ENCODE measurements at regions of chr4 and their contacts with region 1.

Region 1: DNA sequence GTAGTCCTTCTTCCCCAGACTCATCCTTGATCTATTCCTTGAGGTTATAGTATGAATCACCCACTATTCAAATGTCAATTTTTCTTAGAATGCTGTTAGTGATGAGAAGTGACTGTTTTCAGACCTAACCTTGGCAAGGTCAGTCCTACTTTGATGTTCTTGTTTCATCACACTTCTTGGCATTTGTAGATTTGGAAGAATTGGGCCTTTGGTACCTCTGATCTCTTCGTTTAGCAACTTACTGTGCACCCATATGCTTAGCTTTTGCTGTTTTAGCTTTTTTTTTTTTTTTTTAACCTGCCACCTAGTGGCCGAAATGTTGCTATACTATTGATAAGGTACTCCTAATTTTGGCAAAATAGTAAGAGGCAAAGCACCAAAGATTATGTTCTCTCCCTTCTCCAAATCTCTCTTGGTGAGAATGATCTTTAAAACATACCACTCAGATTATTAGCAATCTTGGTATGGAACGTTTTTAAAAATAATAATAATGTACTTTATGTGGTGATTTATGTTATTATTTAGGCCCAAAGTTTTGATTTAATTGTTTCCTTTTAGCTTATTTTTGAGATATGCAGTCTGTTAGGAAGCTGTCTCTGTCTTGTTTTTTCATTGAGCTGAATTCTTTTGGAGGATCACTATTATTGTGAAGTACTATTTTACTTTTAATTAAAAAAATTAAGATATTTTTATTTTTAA is 16.6 kb downstream of the DCK start:
- DNase-seq: no peak
- H3K4me3 ChIP-seq: no peak overlapping the region
- H3K27ac ChIP-seq: no peak overlapping the region
- H3K4me1 ChIP-seq: no peaks in the 10 kb centered on the region
- H3K27me3 ChIP-seq: no peaks in the 10 kb centered on the region
- CTCF ChIP-seq: peak in 1 of 3 experiments; percentile 50

Region 2: DNA sequence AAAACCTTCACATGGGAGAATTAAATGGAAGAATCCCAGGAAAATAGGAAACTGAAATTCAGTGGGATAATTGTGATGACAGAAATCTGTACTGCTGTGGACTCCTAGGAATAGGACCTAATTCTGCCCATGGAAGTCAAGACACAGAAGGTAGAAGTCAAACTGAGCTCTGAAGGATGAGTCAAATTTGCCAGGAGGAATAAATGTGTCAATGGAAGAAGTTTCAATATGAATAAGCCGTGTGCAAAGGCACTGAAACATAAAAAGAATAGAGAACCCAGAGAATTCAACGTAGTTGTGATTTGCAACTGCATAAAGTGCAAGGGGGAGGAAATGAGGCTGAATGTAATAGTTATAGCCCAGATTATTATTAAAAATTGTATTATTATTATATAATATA is 369.8 kb before region 1 on chr4:
- intact Hi-C with region 1: loop called (anchors 10 kb)
- DNase-seq: no peak
- H3K4me3 ChIP-seq: no peak overlapping the region
- H3K27ac ChIP-seq: no peak overlapping the region
- H3K4me1 ChIP-seq: peaks cover 0 to 3% of the 10 kb centered on the region in 2 donors
- H3K27me3 ChIP-seq: no peaks in the 10 kb centered on the region
- CTCF ChIP-seq: no peak